HepG2 (cell line): ENCODE measurements at regions of chr12 and their contacts with region 1.

Region 1: DNA sequence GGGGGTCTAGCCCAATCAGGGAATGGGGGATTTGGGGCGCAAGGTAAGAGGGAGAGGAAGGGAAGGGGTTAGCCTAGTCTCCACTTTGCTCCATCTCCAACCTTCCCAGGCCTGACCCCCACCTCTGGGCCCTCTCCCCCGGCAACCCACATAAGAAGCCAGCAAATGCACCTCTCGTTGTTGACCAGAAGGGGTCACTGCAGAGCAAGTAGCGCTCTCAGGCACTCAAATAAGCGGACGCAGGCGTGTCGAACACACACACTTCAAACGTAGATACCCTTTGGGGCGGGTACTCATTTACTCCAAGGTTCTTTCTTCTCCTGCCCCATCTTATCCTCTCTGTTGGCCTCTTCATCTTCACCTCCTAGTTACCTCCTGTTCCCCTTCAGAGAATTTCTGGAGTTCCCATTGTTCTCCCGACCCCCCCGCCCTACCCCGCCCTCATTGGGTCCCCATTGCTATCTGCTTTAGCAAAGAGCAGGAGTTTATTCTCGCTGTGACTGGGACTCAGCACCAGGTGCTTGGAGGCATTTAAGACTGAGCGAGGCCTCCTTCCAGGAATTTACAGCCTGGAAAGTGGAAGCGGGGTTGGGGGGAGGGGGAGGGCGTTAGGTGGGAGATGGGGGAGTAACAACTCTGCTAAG is 1.5 kb upstream of the SRRM4 start:
- DNase-seq: peak; percentile 56
- ATAC-seq: peak; percentile 83
- H3K4me3 ChIP-seq: no peak overlapping the region
- H3K27ac ChIP-seq: no peak overlapping the region
- H3K4me1 ChIP-seq: no peaks in the 10 kb centered on the region
- H3K27me3 ChIP-seq: peaks cover 4 to 15% of the 10 kb centered on the region in 2 experiments; a peak in 3 of 5 replicates
- CTCF ChIP-seq: peak; percentile 75
- EP300 ChIP-seq: no peak
- POLR2A ChIP-seq: no peak
- RAD21 ChIP-seq: 0 out of 2 replicates have a peak, but pooled peaks have one; percentile 14

Region 2: DNA sequence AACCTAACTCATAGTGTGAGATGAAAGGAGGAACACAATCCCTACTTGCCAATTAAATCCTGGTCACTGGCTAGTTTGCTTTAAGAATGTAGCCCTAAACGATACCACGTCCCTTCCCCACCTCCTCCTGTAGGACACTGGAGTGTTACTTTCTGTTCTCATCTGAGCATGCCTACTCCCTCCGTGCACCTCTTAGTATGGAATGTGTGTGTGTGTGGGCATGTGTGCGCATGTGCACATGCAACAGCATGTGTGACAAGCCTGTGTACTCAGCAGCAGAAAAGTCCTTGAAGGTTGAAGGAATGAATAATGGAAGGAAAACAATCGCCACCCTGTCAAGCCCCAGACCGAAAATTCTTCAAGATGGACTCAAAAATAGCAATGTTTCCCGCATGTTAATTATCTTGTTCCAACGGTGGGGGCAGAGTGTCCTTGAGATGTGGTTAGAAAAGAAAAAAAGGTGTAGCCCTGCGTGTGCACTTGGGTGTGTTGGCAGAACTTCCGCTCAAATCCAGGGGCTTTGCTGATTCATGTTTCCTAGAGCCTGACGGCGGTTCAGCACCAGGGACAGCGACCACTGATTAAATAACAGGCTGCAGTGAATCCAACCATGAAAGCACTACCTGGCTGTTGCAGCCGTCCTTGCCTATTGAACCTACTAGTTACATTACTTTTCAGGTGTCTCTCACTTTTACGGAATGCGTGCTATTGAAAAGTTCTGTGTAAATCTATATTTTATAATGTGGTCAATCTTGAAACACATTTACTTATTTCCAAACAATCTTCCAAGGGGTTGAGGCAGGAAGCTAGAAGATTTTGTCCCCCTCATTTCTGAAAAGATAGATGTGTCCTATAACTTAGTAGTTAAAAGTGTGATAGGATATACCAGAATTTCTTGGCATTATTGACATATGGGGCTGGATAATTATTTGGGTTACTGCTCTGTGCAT is 81.2 kb after region 1 on chr12:
- CTCF ChIA-PET with region 1: no interaction called
- POLR2A ChIA-PET with region 1: no interaction called
- in situ Hi-C with region 1: no loop called
- intact Hi-C with region 1: loop called (anchors 1 kb)
- DNase-seq: peak; percentile 27
- ATAC-seq: no peak
- H3K4me3 ChIP-seq: no peak overlapping the region
- H3K27ac ChIP-seq: no peak overlapping the region
- H3K4me1 ChIP-seq: no peaks in the 10 kb centered on the region
- H3K27me3 ChIP-seq: no peaks in the 10 kb centered on the region
- CTCF ChIP-seq: no peak
- EP300 ChIP-seq: no peak
- POLR2A ChIP-seq: no peak
- RAD21 ChIP-seq: no peak

Region 3: GRCh38 chr12:119340578-119340977 is 360.7 kb after region 1 on chr12:
- CTCF ChIA-PET with region 1: no interaction called
- POLR2A ChIA-PET with region 1: no interaction called
- in situ Hi-C with region 1: no loop called
- intact Hi-C with region 1: no loop called
- DNase-seq: no peak
- ATAC-seq: no peak
- H3K4me3 ChIP-seq: no peak overlapping the region
- H3K27ac ChIP-seq: no peak overlapping the region
- H3K4me1 ChIP-seq: no peaks in the 10 kb centered on the region
- H3K27me3 ChIP-seq: no peaks in the 10 kb centered on the region
- CTCF ChIP-seq: no peak
- EP300 ChIP-seq: no peak
- POLR2A ChIP-seq: no peak
- RAD21 ChIP-seq: no peak